Naive thymus-derived CD8-positive, alpha-beta T cell (primary cell): ENCODE measurements at regions of chr15 and their contacts with region 1.

Region 1: DNA sequence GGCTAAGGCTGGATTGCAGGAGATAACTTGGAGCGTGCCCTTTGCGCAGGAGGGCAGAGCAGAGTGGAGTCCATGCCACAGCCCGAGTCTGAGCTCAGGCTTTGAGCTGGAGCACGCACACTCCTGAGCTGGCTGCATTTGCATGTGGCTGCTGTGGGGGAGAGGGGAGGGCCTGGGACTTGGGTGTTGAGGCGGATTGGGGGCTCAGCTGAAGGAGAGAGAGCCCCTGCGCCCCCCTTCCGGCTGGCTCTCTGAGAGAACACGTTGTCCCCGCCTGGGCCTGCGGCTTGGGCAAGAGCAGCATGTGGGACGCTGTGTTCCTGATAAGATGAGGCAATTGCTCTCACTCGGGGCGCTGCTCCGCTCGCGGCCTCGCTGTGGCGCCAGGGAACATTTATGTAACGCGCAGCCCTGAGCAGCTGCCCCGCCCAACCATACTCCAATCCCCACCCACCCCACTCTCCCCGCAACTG is 39.1 kb downstream of the KLF13 start:
- DNase-seq: peak; percentile 66 to 92 (median 82)
- ATAC-seq: peak; percentile 48 to 61
- H3K4me3 Mint-ChIP-seq: peak overlapping the region; percentile 79 to 95 (median 88)
- H3K27ac Mint-ChIP-seq: peak overlapping the region; percentile 96 to 100 (median 98)
- H3K4me1 Mint-ChIP-seq: peaks cover 59 to 100% (median 99%) of the 10 kb centered on the region in 4 donors
- H3K27me3 Mint-ChIP-seq: no peaks in the 10 kb centered on the region

Region 2: DNA sequence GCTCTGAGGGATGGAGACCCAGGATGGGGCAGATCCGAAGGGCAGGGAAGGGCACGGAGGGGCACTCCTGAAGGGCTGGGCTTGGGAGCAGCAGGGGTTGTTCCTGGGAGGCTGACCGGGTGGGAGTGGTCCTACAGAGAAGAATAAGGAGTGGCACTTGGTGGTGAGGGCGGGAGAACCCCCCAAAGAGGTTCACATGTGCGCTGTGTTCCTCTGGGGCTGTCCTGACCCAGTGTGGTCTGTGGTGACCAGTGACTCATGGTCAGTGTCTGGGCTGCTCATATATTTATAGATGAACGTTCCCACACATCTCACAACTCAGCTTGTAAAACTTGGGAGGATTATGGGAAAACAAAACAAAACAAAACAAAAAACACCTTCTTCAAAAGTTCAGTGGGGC is 274.2 kb before region 1 on chr15:
- POLR2A ChIA-PET with region 1: no interaction called
- DNase-seq: no peak
- ATAC-seq: no peak
- H3K4me3 Mint-ChIP-seq: no peak overlapping the region
- H3K27ac Mint-ChIP-seq: no peak overlapping the region
- H3K4me1 Mint-ChIP-seq: no peaks in the 10 kb centered on the region
- H3K27me3 Mint-ChIP-seq: peaks cover 0 to 2% (median 0%) of the 10 kb centered on the region in 5 donors

Region 3: GRCh38 chr15:31352911-31353811 is 12.5 kb before region 1 on chr15:
- POLR2A ChIA-PET with region 1: interaction called, 660 read pairs
- DNase-seq: peak in 8 of 10 donors; percentile 44 to 82 (median 74)
- ATAC-seq: peak; percentile 48 to 70
- H3K4me3 Mint-ChIP-seq: peak overlapping the region; percentile 71 to 94 (median 86)
- H3K27ac Mint-ChIP-seq: peak overlapping the region; percentile 96 to 100 (median 98)
- H3K4me1 Mint-ChIP-seq: peaks cover 65 to 100% (median 100%) of the 10 kb centered on the region in 4 donors
- H3K27me3 Mint-ChIP-seq: no peaks in the 10 kb centered on the region

Region 4: DNA sequence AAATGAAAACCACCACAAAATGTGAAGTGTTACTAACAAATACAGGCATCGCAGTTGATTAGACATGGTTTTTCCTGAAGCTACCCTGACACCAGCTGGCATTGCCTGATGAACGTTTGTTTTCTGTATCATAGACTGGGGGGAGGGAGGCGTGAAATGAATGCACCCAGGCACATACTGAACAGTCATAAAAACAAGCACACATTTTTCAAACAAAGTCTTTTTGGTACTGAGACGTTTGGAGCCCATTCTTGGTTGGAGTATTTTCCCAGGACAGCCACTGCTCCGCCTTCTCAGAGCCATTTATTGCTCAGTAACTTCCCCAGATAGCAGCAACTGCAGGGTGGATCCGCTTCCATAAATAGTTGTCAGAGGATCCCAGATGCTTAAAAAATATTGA is 13.4 kb after region 1 on chr15:
- POLR2A ChIA-PET with region 1: interaction called, 47 read pairs
- DNase-seq: peak in 2 of 10 donors; percentile 33 to 36
- ATAC-seq: peak; percentile 30 to 41
- H3K4me3 Mint-ChIP-seq: peak overlapping the region in 8 of 10 donors; percentile 15 to 79 (median 74)
- H3K27ac Mint-ChIP-seq: peak overlapping the region; percentile 84 to 97 (median 94)
- H3K4me1 Mint-ChIP-seq: peaks cover 32 to 73% (median 70%) of the 10 kb centered on the region in 4 donors
- H3K27me3 Mint-ChIP-seq: no peaks in the 10 kb centered on the region

Region 5: GRCh38 chr15:31391687-31392671 is 26.3 kb after region 1 on chr15:
- POLR2A ChIA-PET with region 1: interaction called, 308 read pairs
- DNase-seq: peak; percentile 69 to 88 (median 81)
- ATAC-seq: peak; percentile 74 to 83
- H3K4me3 Mint-ChIP-seq: peak overlapping the region; percentile 86 to 97 (median 95)
- H3K27ac Mint-ChIP-seq: peak overlapping the region; percentile 79 to 98 (median 97)
- H3K4me1 Mint-ChIP-seq: peaks cover 35 to 67% (median 57%) of the 10 kb centered on the region in 4 donors
- H3K27me3 Mint-ChIP-seq: no peaks in the 10 kb centered on the region

Region 6: DNA sequence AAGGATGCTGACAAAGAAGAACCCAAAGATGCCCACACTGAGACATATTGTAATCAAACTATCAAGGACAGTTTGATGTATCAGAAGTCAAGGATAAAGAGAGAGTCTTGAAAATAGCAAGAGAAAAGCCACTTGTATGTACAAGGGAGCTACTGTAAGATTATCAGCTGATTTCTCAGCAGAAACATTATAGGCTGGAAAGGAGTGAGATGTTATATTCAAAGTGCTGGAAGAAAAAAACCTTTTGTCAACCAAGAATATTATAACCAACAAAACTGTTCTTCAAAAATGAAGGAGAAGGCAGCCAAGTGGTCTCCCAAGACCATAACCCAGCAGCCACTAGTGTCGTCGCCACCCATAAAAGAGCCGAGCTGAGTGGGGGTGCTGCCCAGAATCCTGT is 54.1 kb after region 1 on chr15:
- POLR2A ChIA-PET with region 1: no interaction called
- DNase-seq: no peak
- ATAC-seq: no peak
- H3K4me3 Mint-ChIP-seq: no peak overlapping the region
- H3K27ac Mint-ChIP-seq: no peak overlapping the region
- H3K4me1 Mint-ChIP-seq: no peaks in the 10 kb centered on the region
- H3K27me3 Mint-ChIP-seq: no peaks in the 10 kb centered on the region

Region 7: DNA sequence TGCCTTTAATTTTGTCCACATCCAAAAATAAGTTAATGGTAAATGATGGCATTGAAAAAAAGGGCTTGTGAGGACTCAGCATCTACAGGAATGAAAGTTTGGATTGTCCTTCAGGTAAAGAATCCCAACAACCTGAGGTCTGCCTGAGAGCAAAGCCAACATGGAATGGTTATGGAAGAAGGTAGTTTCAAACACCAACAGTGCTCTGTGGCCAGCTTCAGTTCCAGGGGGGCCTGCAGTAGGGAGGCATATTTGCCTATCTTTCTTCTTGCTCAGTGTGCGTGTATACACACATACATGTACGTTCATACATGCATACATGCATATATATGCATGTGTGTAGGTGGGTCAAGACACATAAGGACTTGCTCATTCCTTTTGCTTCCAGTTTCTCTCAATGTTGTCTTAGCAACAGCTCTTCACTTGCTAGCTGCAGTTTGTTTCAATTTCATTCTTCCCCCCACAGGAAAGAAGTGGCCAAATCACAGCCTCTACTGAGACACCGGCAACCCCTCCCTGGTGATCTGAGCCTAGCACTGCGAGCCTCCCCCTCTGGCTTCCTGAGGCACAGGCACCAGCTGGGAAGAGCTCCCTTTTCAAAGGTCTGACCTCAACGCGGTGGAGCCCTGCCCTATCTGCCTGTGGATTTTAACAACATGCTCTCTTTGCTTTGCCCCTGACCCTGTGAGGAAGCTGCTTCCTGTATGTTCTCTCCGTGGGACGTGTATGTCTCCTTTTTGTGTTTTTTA is 107.1 kb after region 1 on chr15:
- POLR2A ChIA-PET with region 1: interaction called, 10 read pairs
- DNase-seq: peak in 9 of 10 donors; percentile 27 to 75 (median 57)
- ATAC-seq: peak; percentile 84 to 87
- H3K4me3 Mint-ChIP-seq: peak overlapping the region; percentile 66 to 88 (median 81)
- H3K27ac Mint-ChIP-seq: peak overlapping the region; percentile 84 to 97 (median 95)
- H3K4me1 Mint-ChIP-seq: peaks cover 30 to 79% (median 63%) of the 10 kb centered on the region in 4 donors
- H3K27me3 Mint-ChIP-seq: no peaks in the 10 kb centered on the region

Region 8: DNA sequence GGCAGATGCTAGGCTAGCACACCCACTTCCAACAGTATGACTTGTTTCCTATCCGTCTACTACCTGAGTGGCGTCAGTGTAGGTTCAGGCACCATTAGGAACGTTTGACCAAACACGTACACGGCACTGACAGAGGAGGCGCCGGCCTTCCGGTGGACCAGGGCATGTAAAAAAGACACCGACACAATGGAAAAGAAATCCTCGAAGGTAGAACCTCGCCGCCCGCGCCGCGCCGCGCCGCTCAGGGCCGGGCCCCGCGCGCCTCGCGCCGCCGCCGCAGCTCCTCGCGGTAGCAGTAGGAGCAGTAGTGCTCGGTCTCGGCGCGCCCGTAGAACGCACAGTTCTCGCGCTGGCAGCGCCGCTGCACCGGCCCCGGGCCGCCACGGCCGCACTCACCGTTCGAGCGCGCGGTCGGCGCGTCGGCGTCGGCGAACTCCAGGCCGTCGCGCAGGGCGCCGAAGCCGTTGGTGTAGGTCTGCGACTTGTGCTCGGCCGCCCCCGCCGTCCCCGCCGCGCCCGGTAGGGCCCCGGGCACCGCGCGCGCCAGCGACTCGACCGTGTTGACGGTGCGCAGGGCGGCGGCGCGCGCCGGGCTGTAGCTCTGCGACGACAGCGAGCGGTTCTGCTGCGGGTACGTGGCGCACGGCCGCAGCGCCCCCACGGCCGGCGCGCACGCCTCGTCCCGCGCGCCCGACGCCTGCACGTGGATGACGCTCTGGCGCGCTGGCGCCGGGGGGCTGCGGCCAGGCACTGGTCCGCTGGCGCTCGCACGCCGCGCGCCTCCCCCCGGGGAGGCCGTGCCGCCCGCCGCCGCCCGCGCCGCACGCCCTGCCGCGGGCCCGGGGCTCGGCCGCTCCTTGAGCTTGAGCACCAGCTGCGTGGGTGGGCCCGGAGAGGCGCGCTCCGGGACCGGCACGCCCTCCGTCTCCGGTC is 117.6 kb after region 1 on chr15:
- POLR2A ChIA-PET with region 1: interaction called, 57 read pairs
- DNase-seq: peak; percentile 33 to 76 (median 50)
- ATAC-seq: peak; percentile 72 to 79
- H3K4me3 Mint-ChIP-seq: peak overlapping the region; percentile 90 to 98 (median 97)
- H3K27ac Mint-ChIP-seq: peak overlapping the region; percentile 89 to 98 (median 96)
- H3K4me1 Mint-ChIP-seq: peaks cover 31 to 69% (median 60%) of the 10 kb centered on the region in 4 donors
- H3K27me3 Mint-ChIP-seq: peaks cover 0 to 6% (median 0%) of the 10 kb centered on the region in 5 donors

Region 9: DNA sequence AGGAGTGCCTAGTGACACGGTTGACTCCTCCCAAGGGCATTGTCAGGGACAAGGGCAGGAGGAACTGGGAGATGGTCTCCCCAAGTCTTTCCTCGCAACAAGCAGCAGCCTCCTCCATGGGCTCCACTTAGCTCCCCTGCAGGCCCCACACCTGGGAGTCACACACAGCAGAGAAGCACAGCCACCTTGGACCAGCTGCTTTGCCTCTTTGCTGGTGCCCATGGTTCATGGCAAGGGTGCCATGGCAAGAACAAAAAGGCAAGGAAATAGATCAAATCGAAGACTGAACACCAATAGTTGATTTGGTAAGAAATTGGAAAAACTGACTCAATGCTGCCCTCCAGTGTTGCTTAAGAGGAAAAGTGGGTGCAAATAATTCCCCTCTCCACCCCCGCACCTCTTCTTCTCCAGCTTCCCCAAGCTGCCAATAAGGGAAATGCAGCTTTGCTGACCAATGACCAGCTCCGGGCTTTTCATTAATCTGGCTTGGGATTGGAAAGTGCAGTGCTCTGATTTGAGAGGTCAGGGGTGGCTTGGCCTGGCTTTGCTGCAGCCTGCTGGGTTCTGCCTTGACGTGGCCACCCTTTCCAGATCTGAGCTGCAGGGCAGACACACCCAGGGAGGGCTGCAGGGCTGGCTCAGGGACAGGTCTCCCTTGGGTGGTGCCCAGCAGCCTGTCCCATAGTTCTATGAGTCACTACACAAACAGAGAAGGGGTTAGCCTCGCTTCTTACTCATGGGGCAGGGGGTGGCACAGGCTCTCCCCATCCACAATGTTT is 122.9 kb after region 1 on chr15:
- POLR2A ChIA-PET with region 1: interaction called, 57 read pairs
- DNase-seq: peak in 8 of 10 donors; percentile 17 to 71 (median 44)
- ATAC-seq: peak; percentile 28 to 43
- H3K4me3 Mint-ChIP-seq: peak overlapping the region in 1 of 10 donors; percentile 35
- H3K27ac Mint-ChIP-seq: peak overlapping the region; percentile 32 to 82 (median 66)
- H3K4me1 Mint-ChIP-seq: peaks cover 16 to 48% (median 35%) of the 10 kb centered on the region in 4 donors
- H3K27me3 Mint-ChIP-seq: peaks cover 0 to 5% (median 0%) of the 10 kb centered on the region in 5 donors